ENCODE measurements at regions of chr1 and their contacts with region 1.

Region 1: DNA sequence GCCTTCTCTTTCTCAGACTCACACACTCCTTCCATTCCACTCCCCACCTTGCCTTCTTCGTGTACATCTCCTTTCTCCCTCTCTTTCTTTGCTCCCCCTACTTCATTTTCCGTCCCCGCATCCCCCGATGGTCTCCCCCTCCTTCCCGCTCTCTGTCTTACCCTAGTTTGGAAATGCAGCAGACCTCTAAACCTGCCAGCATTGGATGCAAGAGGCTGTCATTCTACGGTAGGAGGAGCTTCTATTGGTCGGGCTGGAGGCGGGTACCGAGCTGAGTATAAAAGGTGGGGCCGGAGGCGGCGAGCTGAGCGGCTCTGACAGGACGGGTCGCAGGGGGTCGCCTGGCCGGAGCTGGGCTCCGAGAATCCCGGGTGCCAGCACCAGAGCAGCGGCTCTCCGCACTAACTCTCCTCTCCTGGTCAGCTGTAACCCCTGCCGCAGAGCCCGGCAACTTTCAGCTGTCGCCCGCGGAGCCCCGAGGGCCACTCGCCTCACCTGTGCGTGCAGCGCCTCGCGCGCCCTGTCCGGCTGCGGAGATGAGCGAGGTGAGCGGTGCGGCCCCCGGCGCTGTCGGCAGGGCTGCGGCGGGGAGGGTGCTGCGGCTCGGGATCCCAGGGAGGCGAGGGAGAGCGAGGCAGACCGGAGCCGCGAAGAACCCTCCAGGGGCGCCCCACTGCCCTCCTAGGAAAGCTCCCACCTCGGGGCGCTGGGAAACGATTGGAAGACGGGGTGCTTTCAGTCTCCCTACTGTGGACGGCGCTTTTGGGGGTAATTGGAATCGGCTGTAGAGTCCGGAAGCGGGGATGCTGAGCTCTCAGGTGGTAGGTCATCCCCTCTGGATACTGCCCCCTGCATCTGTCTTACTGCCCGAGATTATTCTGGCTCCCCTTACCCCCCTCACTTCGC is at the start of gene PCP4L1:
- DNase-seq: peak; percentile 68 to 91
- H3K4me3 ChIP-seq: peak within 1 kb of the TSS; percentile 51 to 68 (median 64)
- H3K27ac ChIP-seq: no peak within 1 kb of the TSS
- H3K4me1 ChIP-seq: peaks cover 0 to 8% (median 3%) of the 10 kb centered on the region in 4 experiments; a peak in 3 of 7 replicates
- H3K27me3 ChIP-seq: peaks cover 7 to 25% (median 22%) of the 10 kb centered on the region in 4 experiments
- CTCF ChIP-seq: no peak
- EP300 ChIP-seq: no peak
- POLR2A ChIP-seq: peak in 1 of 2 experiments; percentile 82; a peak in 2 of 3 replicates
- RAD21 ChIP-seq: no peak
- total RNA-seq, gene PCP4L1: 1.0 and 1.9 TPM in 2 replicates

Region 2: DNA sequence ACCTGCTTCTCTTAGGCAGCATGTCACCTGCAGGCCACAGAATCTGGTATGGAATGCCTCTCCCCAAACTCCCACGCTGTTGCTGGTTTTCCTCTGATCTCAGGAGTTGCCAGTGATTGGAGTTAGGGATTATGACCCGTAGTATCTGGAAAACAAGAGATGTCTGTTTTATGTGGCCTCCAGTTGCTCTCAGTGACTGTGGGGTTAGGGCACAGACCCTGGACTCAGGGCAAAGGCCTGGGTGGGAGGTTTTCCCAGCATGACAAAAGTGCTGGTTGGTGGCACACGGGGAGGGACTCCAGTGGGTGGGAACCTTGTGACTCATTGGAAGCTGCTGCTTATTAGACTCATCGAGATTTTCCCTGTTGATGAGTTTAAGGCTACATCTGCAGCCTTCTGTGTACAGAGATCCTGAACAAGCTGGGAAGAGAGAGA is 20.6 kb before region 1 on chr1 and contains the start of gene NR1I3:
- CTCF ChIA-PET with region 1: interaction called, 10 read pairs
- POLR2A ChIA-PET with region 1: interaction called, 4 read pairs
- DNase-seq: no peak
- H3K4me3 ChIP-seq: no peak within 1 kb of the TSS
- H3K27ac ChIP-seq: no peak within 1 kb of the TSS
- H3K4me1 ChIP-seq: no peaks in the 10 kb centered on the region
- H3K27me3 ChIP-seq: no peaks in the 10 kb centered on the region
- CTCF ChIP-seq: no peak
- EP300 ChIP-seq: no peak
- POLR2A ChIP-seq: no peak
- RAD21 ChIP-seq: no peak
- total RNA-seq, gene NR1I3: not detected in 2 replicates

Region 3: GRCh38 chr1:161274874-161275273 is 16.2 kb after region 1 on chr1:
- CTCF ChIA-PET with region 1: interaction called, 11 read pairs
- POLR2A ChIA-PET with region 1: interaction called, 4 read pairs
- DNase-seq: no peak
- H3K4me3 ChIP-seq: no peak overlapping the region
- H3K27ac ChIP-seq: no peak overlapping the region
- H3K4me1 ChIP-seq: no peaks in the 10 kb centered on the region
- H3K27me3 ChIP-seq: no peaks in the 10 kb centered on the region
- CTCF ChIP-seq: no peak
- EP300 ChIP-seq: no peak
- POLR2A ChIP-seq: no peak
- RAD21 ChIP-seq: no peak

Region 4: GRCh38 chr1:161314201-161314981 is 55.7 kb after region 1 on chr1 and contains the start of gene SDHC:
- CTCF ChIA-PET with region 1: no interaction called
- POLR2A ChIA-PET with region 1: interaction called, 23 read pairs
- DNase-seq: peak; percentile 68 to 92
- H3K4me3 ChIP-seq: peak within 1 kb of the TSS; percentile 74 to 98 (median 94)
- H3K27ac ChIP-seq: peak within 1 kb of the TSS; percentile 96
- H3K4me1 ChIP-seq: peaks cover 0 to 8% (median 6%) of the 10 kb centered on the region in 4 experiments; a peak in 6 of 7 replicates
- H3K27me3 ChIP-seq: no peaks in the 10 kb centered on the region; a peak in 1 of 7 replicates
- CTCF ChIP-seq: peak; percentile 26 to 53 (median 38)
- EP300 ChIP-seq: peak in 1 of 2 experiments; percentile 56; a peak in 1 of 3 replicates
- POLR2A ChIP-seq: peak; percentile 91 to 99
- RAD21 ChIP-seq: peak in 1 of 2 experiments; percentile 4; a peak in 1 of 4 replicates
- total RNA-seq, gene SDHC: 216 and 224 TPM in 2 replicates